Caco-2 (cell line): ENCODE measurements at regions of chr21 and their contacts with region 1.

Region 1: DNA sequence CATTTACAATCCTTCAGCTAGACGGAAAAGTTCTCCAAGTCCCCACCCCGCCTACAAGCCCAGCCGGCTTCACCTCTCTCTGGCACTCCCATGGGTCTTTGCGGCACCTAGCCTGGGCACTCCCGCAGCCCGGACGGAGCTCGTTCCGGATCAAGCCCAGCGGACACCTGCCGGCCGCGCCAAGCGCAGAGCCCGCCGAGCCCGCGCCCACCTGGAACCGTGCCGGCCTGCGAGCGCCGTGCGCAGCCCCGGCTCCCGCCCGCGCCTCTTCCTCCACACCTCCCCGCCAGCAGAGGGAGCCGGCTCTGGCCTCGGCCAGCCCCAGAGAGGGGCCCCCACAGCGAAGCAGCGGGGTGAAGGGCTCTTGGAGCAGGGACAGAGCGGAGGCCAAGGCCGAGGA is 50.0 kb upstream of the KRTAP19-8 start:
- DNase-seq: no peak
- H3K4me3 ChIP-seq: no peak overlapping the region
- H3K4me3 Mint-ChIP-seq: no peak overlapping the region
- H3K27ac Mint-ChIP-seq: no peak overlapping the region
- H3K4me1 ChIP-seq: no peaks in the 10 kb centered on the region
- H3K4me1 Mint-ChIP-seq: no peaks in the 10 kb centered on the region
- H3K27me3 ChIP-seq: no peaks in the 10 kb centered on the region
- H3K27me3 Mint-ChIP-seq: peaks cover 13% of the 10 kb centered on the region
- CTCF ChIP-seq: no peak

Region 2: DNA sequence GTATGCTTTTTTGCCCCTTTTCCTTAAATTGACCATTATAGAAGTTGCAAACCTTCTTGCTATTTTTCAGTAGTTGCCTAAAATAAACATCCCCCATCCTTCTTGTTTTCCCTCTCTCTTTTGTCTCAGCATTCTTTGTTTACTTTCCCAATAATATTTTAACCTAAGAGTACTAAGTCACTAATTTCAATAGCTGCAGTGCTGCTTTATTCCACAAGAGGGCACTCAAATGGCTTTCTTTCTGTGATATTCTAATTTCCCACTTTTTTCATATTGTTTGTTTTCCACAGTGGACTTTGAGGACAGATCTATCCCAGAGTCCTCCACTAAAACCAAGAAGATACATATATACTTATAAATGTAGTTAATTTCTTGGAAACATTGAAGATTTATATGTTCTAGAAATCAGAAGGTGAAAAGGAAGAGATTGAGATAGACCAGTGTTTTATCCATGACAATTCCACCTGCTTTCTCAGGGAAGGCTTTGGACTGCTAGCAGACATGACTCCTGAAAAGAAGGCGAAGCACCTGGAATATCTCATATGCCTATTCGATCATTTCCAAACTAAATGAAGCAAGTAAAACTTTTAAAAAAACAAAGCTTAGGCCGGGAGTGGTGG is 1043.8 kb before region 1 on chr21:
- CTCF ChIA-PET with region 1: no interaction called
- POLR2A ChIA-PET with region 1: no interaction called
- intact Hi-C with region 1: loop called (anchors 10 kb)
- DNase-seq: peak in 1 of 2 experiments; percentile 29
- H3K4me3 ChIP-seq: no peak overlapping the region
- H3K4me3 Mint-ChIP-seq: no peak overlapping the region
- H3K27ac Mint-ChIP-seq: no peak overlapping the region
- H3K4me1 ChIP-seq: no peaks in the 10 kb centered on the region
- H3K4me1 Mint-ChIP-seq: no peaks in the 10 kb centered on the region
- H3K27me3 ChIP-seq: no peaks in the 10 kb centered on the region
- H3K27me3 Mint-ChIP-seq: peaks cover 2% of the 10 kb centered on the region
- CTCF ChIP-seq: peak; percentile 63 to 69

Region 3: GRCh38 chr21:30340441-30341241 is 747.7 kb before region 1 on chr21:
- CTCF ChIA-PET with region 1: no interaction called
- POLR2A ChIA-PET with region 1: no interaction called
- intact Hi-C with region 1: loop called (anchors 1 kb)
- DNase-seq: peak; percentile 43 to 48
- H3K4me3 ChIP-seq: no peak overlapping the region
- H3K4me3 Mint-ChIP-seq: no peak overlapping the region
- H3K27ac Mint-ChIP-seq: no peak overlapping the region
- H3K4me1 ChIP-seq: no peaks in the 10 kb centered on the region
- H3K4me1 Mint-ChIP-seq: no peaks in the 10 kb centered on the region
- H3K27me3 ChIP-seq: no peaks in the 10 kb centered on the region
- H3K27me3 Mint-ChIP-seq: peaks cover 3% of the 10 kb centered on the region
- CTCF ChIP-seq: peak; percentile 79 to 86

Region 4: DNA sequence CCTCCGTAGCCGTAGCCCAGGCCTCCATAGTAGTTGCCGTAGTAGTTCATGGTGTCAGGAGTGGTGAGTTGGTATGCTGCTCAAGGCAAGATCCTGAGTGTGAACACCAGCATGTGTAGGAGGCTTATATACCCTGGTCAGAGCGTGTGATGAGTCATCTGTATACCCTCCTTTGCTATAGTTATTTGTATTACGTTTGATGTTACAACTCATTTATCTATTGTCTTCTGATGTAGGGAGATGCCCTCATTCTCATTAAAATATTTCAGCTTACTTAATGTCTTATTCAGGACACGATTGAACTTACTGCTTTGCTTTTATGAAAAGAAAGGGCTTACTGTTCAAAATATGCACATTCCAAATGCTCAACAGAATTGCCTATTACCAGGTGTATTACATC is 586.3 kb before region 1 on chr21 and contains the start of gene KRTAP19-5:
- CTCF ChIA-PET with region 1: no interaction called
- POLR2A ChIA-PET with region 1: no interaction called
- intact Hi-C with region 1: loop called (anchors 1 kb)
- DNase-seq: no peak
- H3K4me3 ChIP-seq: no peak within 1 kb of the TSS
- H3K4me3 Mint-ChIP-seq: no peak within 1 kb of the TSS
- H3K27ac Mint-ChIP-seq: no peak within 1 kb of the TSS
- H3K4me1 ChIP-seq: no peaks in the 10 kb centered on the region
- H3K4me1 Mint-ChIP-seq: no peaks in the 10 kb centered on the region
- H3K27me3 ChIP-seq: no peaks in the 10 kb centered on the region
- H3K27me3 Mint-ChIP-seq: peaks cover 9% of the 10 kb centered on the region
- CTCF ChIP-seq: no peak
- total RNA-seq, gene KRTAP19-5: not detected in 2 replicates

Region 5: DNA sequence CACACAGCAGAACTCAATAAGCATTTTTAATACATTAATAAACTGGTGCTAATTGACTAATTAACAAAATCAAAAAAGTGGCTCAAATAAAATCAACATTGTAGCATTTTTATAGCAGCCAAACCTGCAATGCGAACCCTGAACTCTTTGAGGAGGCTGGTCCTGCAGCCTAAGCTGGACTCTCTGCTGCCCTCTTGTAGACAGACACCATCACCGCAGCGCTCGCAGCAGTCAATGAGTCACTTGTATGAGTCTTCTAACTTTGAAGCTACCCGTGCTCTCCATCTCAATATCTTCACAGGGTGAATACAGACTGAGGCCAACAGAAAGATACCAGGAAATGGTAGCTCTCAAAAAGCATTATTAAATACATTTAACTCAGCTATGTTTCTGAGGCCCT is 249.0 kb before region 1 on chr21:
- CTCF ChIA-PET with region 1: no interaction called
- POLR2A ChIA-PET with region 1: no interaction called
- intact Hi-C with region 1: loop called (anchors 1 kb)
- DNase-seq: peak; percentile 54 to 60
- H3K4me3 ChIP-seq: no peak overlapping the region
- H3K4me3 Mint-ChIP-seq: no peak overlapping the region
- H3K27ac Mint-ChIP-seq: no peak overlapping the region
- H3K4me1 ChIP-seq: no peaks in the 10 kb centered on the region
- H3K4me1 Mint-ChIP-seq: no peaks in the 10 kb centered on the region
- H3K27me3 ChIP-seq: no peaks in the 10 kb centered on the region
- H3K27me3 Mint-ChIP-seq: peaks cover 2% of the 10 kb centered on the region
- CTCF ChIP-seq: peak; percentile 66 to 68

Region 6: GRCh38 chr21:30962013-30962412 is 126.3 kb before region 1 on chr21:
- CTCF ChIA-PET with region 1: no interaction called
- POLR2A ChIA-PET with region 1: no interaction called
- intact Hi-C with region 1: no loop called
- DNase-seq: no peak
- H3K4me3 ChIP-seq: no peak overlapping the region
- H3K4me3 Mint-ChIP-seq: no peak overlapping the region
- H3K27ac Mint-ChIP-seq: no peak overlapping the region
- H3K4me1 ChIP-seq: no peaks in the 10 kb centered on the region
- H3K4me1 Mint-ChIP-seq: no peaks in the 10 kb centered on the region
- H3K27me3 ChIP-seq: no peaks in the 10 kb centered on the region
- H3K27me3 Mint-ChIP-seq: peaks cover 8% of the 10 kb centered on the region
- CTCF ChIP-seq: peak; percentile 27 to 29

Region 7: GRCh38 chr21:31022306-31022705 is 66.0 kb before region 1 on chr21:
- CTCF ChIA-PET with region 1: no interaction called
- POLR2A ChIA-PET with region 1: no interaction called
- intact Hi-C with region 1: loop called (anchors 10 kb)
- DNase-seq: no peak
- H3K4me3 ChIP-seq: no peak overlapping the region
- H3K4me3 Mint-ChIP-seq: no peak overlapping the region
- H3K27ac Mint-ChIP-seq: no peak overlapping the region
- H3K4me1 ChIP-seq: no peaks in the 10 kb centered on the region
- H3K4me1 Mint-ChIP-seq: no peaks in the 10 kb centered on the region
- H3K27me3 ChIP-seq: no peaks in the 10 kb centered on the region
- H3K27me3 Mint-ChIP-seq: peaks cover 17% of the 10 kb centered on the region
- CTCF ChIP-seq: no peak